ENCODE measurements at regions of chr14 and their contacts with region 1.

Region 1: DNA sequence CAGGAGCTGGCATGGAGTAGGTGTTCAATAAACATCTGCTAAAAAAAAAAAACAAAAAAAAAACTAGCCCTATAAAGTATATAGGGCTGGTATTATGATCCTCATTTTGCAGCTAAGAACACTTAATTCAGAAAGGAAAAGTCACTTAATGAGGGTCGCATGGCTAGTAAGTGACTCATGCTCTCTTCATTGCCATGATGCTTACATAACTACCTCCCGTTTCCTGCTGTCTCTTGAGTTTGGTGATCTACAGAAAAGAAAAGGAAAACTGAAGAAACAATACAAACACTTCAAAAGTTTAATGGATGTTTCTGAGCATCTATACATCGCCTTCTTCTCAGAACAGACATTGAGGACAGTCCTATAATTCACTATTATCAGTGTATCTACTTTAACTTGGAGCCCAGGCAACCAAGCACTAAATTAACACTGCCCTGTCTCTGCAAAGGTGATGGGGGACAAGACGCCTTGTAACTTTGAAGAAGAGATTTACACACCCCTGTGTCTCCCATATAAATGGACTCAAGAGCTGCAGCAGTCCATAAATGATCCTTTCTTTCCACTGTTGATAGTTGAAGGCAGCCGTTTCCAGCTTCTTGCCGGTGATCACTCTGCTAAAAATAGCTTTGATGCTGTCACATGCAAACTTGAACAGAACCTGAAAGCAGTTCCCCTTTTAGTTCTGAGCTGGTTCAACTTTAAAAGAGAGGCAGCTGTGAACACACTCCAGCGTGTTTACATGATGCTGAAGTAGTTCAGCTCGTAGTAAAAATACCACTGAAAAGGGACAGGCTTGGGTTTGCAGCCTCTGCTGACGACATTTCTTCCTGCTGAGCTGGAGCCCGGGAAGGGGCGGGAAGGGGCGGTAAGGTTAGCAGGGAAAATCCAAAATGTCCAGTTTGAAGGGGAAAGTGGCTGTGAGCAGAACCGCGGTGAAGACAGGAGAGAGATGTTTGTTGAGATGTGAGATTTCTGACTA is 113.3 kb downstream of the FOXN3 start:
- DNase-seq: peak; percentile 53 to 59
- ATAC-seq: peak; percentile 90 to 93
- H3K4me3 ChIP-seq: peak overlapping the region; percentile 38 to 42 (median 40)
- H3K27ac ChIP-seq: peak overlapping the region; percentile 90 to 95 (median 92)
- H3K4me1 ChIP-seq: peaks cover 66 to 77% of the 10 kb centered on the region in 2 donors
- H3K27me3 ChIP-seq: no peaks in the 10 kb centered on the region
- CTCF ChIP-seq: no peak
- POLR2A ChIP-seq: peak; percentile 46 to 73

Region 2: GRCh38 chr14:89252887-89253547 is 50.7 kb before region 1 on chr14:
- in situ Hi-C with region 1: no loop called
- intact Hi-C with region 1: loop called (anchors 2 kb)
- DNase-seq: peak in 1 of 2 donors; percentile 36
- ATAC-seq: peak; percentile 37 to 39
- H3K4me3 ChIP-seq: no peak overlapping the region
- H3K27ac ChIP-seq: peak overlapping the region in 2 of 4 donors; percentile 41 to 50
- H3K4me1 ChIP-seq: peaks cover 55 to 65% of the 10 kb centered on the region in 2 donors
- H3K27me3 ChIP-seq: no peaks in the 10 kb centered on the region
- CTCF ChIP-seq: peak in 3 of 5 experiments; percentile 28 to 47 (median 30)
- POLR2A ChIP-seq: no peak

Region 3: GRCh38 chr14:89336338-89336737 is 32.6 kb after region 1 on chr14:
- in situ Hi-C with region 1: no loop called
- intact Hi-C with region 1: loop called (anchors 5 kb)
- DNase-seq: no peak
- ATAC-seq: peak in 1 of 2 donors; percentile 13
- H3K4me3 ChIP-seq: no peak overlapping the region
- H3K27ac ChIP-seq: no peak overlapping the region
- H3K4me1 ChIP-seq: peaks cover 48 to 51% of the 10 kb centered on the region in 2 donors
- H3K27me3 ChIP-seq: no peaks in the 10 kb centered on the region
- CTCF ChIP-seq: no peak
- POLR2A ChIP-seq: no peak

Region 4: DNA sequence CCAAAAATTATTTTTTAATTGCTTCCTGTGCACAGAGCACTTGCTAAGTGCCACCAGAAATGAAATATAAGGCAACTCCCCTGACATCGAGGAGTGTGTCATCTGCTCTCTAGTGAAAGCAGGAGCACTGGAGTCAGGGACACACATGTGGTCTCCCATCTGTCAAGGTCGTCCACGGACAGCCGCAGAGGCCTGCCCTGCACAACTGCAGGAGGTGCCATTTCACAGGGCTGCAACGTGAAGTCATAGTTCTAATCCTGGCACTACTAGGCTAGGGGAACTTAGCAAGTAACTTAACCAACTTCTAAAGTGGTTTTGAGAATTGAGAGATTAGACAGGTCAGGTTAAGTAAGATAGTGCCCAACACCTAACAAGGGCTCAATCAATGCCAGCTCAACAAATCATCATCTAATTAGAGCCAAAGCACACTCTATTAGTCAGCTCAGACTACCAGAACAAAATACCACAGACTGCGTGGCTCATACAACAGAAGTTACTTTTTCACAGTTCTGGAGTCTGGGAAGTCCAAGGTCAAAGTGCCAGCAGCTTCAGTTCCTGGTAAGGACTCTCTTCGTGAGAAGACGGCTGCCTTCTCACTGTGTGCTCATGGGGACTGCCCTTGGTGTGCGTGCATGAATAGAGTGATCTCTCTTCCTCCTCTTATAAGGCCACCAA is 82.6 kb after region 1 on chr14:
- in situ Hi-C with region 1: no loop called
- intact Hi-C with region 1: loop called (anchors 2 kb)
- DNase-seq: peak; percentile 58 to 86
- ATAC-seq: peak; percentile 77 to 82
- H3K4me3 ChIP-seq: peak overlapping the region in 2 of 4 donors; percentile 1 to 3
- H3K27ac ChIP-seq: peak overlapping the region; percentile 78 to 84 (median 84)
- H3K4me1 ChIP-seq: peaks cover 60 to 71% of the 10 kb centered on the region in 2 donors
- H3K27me3 ChIP-seq: no peaks in the 10 kb centered on the region
- CTCF ChIP-seq: no peak
- POLR2A ChIP-seq: no peak